ENCODE measurements at regions of chr3 and their contacts with region 1.

Region 1: DNA sequence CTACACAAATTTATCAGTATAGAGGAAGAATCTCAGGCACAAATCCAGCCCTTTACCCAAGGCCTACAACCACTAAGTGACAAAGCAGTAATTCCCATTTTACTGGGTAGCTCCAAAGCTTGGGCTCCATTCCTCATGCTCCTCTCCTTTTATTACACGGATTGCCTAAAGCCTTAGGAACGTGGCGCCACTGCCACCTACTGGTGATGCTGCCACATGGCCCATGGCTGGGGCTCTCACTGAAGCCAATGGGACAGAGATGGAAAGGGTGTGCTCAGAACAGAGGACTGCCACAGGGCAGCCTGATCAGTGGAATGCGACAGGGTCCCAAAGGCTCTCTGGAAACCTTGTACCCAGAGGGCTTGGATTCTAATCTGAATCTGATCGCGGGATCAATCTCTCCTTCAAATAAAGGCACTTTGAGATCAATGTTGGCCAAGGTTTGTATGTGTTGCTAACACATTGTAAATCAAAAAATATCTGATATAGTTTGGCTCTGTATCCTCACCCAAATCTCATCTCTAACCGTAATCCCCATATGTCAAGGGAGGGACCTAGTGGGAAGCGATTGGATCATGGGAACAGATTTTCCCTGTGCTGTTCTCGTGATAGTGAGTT is 33.5 kb upstream of the LYZL4 start:
- DNase-seq: peak; percentile 3
- H3K4me3 ChIP-seq: no peak overlapping the region
- H3K27me3 ChIP-seq: peaks cover 6% of the 10 kb centered on the region
- CTCF ChIP-seq: peak; percentile 96

Region 2: DNA sequence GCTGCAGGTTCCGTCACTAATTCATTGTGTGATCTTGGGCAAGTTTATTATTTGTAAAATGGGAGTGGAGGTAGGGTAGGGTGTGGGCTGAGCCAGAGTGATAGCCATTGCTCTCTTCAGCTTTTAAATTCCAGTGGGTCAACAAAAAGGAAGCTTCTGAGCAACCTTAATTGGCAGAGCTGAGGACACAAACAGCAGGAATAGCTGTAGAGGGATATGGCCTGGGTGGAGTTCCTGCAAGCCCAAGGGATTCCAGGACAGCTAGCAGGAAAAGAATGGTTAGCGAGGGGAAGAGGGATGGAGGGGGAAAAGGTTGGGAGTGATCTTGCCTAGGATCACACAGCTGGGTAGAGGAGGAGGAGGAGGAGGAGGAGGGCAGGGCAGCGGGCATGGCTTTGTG is 189.4 kb before region 1 on chr3:
- CTCF ChIA-PET with region 1: interaction called, 122 read pairs
- POLR2A ChIA-PET with region 1: no interaction called
- DNase-seq: no peak
- H3K4me3 ChIP-seq: no peak overlapping the region
- H3K27me3 ChIP-seq: peaks cover 1% of the 10 kb centered on the region; the same call in 1 of the 2 replicates
- CTCF ChIP-seq: no peak

Region 3: DNA sequence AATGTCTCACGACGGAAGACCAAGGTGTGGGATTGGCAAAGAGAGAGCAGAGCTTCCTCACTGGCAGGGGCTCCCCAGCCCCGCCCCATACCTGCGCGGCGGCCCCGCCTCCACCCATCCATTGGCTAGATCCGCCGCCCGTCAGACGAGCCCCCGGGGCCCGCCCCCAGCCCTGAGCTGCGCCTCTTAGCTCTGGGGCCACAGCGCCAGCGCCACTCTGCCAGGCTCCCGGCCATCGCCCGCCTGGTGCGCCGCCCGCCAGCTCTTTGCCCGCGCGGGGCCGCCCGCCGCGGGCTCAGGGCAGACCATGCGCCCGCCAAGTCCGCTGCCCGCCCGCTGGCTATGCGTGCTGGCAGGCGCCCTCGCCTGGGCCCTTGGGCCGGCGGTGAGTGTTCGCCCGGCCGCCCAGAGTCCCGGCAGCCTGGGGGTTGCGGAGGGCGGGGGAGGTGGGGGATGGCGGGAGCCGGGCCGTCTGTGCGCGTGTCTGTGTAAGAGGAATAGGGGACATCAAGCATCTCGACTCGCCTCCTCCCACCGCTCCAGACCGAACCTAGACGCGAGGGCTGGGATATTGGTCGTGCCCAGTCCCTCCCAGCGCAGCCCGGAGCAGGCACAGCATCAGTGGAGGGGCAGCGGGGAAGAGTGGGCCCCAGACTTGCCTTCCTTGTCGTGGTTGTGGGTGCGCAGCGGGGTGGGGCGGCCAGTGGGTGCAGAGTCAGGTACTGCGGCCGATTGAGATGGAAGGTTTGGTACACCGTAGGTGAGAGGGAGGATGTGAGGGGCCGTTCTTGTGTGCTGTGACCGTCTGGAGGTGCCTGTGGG is 58.7 kb after region 1 on chr3 and contains the start of gene VIPR1:
- CTCF ChIA-PET with region 1: no interaction called
- POLR2A ChIA-PET with region 1: no interaction called
- DNase-seq: no peak
- H3K4me3 ChIP-seq: 0 out of 2 replicates have a peak within 1 kb of the TSS, but pooled peaks have one; percentile 10
- H3K27me3 ChIP-seq: peaks cover 38% of the 10 kb centered on the region
- CTCF ChIP-seq: no peak
- polyA plus RNA-seq, gene VIPR1: not detected in 2 replicates